HCT116 (cell line): ENCODE measurements at regions of chr17 and their contacts with region 1.

Region 1: DNA sequence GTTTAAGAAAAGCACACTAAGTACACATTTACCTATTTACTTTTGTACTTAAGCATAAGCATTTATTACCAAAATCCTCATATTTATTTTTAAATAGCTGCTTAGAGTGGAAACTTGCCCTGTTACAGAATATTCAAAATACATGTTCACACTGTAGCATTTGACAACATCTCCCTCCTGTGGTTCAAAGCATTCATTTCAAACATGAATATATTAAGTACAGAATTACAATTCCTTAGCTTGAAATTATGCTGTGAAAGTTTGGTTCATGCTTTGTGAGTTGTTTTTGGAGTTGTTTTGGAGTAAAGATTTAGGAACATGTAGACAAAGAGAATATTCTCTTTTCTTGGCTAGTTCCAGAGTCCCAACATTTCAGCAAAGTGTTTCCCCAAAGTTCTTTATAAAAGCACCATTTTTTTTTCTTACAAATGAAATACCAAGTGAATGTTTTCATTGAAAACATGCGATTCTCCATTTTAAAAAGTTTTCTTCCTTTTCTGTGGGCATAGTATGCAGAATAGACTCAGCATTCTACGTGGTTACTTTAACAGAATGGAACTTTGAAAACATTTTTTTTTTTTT is 33.2 kb downstream of the TUBD1 start:
- DNase-seq: no peak
- ATAC-seq: peak; percentile 67
- H3K4me3 ChIP-seq: no peak overlapping the region
- H3K27ac ChIP-seq: no peak overlapping the region
- H3K4me1 ChIP-seq: peaks cover 18 to 32% of the 10 kb centered on the region in 2 experiments; a peak in 3 of 4 replicates
- H3K27me3 ChIP-seq: no peaks in the 10 kb centered on the region
- CTCF ChIP-seq: peak; percentile 44 to 88 (median 80); a peak in 4 of 6 replicates
- POLR2A ChIP-seq: no peak
- RAD21 ChIP-seq: peak; percentile 97

Region 2: DNA sequence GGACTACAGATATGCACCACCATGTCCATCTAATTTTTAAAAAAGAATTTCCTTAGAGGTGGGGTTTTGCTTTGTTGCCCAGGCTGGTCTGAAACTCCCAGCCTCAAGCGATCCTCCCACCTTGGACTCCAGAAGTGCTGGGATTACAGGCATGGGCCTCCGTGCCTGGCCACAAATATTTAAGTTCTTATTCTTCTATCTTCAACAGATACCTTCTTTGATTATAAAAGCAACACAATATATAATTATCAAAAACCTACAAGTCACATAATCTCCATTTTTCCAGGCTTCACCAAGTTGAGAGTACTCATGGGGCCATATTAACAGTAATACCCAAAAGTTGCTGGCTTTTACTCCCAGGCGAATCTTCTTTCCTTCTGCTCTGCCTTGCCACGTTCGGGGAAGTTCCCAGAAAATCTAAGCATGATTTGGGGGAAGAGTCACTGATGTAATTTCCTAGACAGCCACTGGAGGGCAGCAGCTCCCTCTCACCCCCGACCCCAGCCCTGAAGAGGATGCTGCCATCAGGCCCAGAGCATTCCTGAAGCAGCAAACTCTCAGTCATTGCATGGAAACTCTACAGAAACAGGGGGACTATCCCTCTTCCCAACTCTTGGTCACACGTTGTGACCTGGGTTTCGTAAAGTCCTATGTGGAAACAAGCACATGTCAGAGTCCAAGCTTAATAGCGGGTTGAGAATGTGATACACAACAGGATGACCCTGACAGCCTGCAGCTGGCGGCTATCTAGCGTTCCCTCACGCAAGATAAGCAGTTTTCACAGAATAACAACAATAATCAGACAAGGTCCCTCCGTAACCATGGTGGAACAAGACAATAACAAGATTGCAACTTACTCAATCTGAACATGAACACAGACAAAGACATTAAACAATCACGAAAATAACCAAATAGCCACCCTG is 338.1 kb before region 1 on chr17:
- CTCF ChIA-PET with region 1: interaction called, 8 read pairs
- POLR2A ChIA-PET with region 1: no interaction called
- RAD21 ChIA-PET with region 1: no interaction called
- intact Hi-C with region 1: loop called (anchors 1 kb)
- DNase-seq: peak; percentile 49
- ATAC-seq: peak; percentile 98
- H3K4me3 ChIP-seq: no peak overlapping the region
- H3K27ac ChIP-seq: no peak overlapping the region
- H3K4me1 ChIP-seq: peaks cover 0 to 10% of the 10 kb centered on the region in 2 experiments; a peak in 2 of 4 replicates
- H3K27me3 ChIP-seq: no peaks in the 10 kb centered on the region
- CTCF ChIP-seq: peak; percentile 82 to 98 (median 96)
- POLR2A ChIP-seq: no peak
- RAD21 ChIP-seq: peak; percentile 92

Region 3: GRCh38 chr17:59746849-59747445 is 112.6 kb before region 1 on chr17:
- CTCF ChIA-PET with region 1: interaction called, 57 read pairs
- POLR2A ChIA-PET with region 1: interaction called, 8 read pairs
- RAD21 ChIA-PET with region 1: interaction called, 6 to 11 read pairs
- intact Hi-C with region 1: loop called (anchors 1 kb)
- DNase-seq: no peak
- ATAC-seq: peak; percentile 64
- H3K4me3 ChIP-seq: no peak overlapping the region
- H3K27ac ChIP-seq: peak overlapping the region; percentile 26
- H3K4me1 ChIP-seq: peaks cover 39 to 42% of the 10 kb centered on the region in 2 experiments
- H3K27me3 ChIP-seq: no peaks in the 10 kb centered on the region
- CTCF ChIP-seq: peak; percentile 57 to 89 (median 88)
- POLR2A ChIP-seq: no peak
- RAD21 ChIP-seq: peak; percentile 93

Region 4: DNA sequence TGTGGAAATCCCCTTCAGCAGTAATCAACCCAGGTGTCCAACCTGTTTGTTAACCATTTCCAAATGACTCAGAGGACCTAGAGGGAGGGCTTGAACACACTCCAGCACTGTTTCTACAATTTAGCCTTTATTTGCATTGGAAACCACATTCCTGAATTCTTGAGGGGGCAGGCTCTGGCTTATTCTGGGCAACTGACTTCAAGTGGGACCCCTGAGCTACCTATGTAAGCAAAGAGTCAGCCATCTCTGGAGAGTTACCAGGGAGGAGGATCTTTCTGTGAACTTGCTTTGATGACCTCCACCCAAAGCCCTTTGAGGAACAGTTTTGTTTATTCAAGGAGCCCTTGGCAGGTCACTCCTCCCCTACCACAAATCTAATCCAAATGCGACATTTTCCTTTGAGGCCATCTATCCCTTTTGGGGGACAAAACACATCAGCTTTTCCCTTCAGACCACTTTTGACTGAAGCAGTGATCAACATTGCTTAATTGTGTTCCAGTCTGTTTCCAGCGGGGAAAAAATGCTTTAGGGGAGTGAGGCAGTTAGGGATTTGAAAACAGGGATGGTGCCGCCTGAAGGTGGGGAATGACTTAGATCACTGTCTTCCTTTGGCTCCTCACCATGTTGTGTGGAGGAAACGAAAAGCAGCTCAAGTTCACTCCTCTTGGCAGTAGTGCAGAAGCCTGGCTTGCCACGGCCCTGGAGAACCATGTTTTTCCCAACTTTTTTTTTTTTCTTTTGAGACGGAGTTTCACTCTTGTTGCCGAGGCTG is 13.0 kb before region 1 on chr17:
- CTCF ChIA-PET with region 1: interaction called, 19 read pairs
- POLR2A ChIA-PET with region 1: interaction called, 9 read pairs
- RAD21 ChIA-PET with region 1: no interaction called
- intact Hi-C with region 1: no loop called
- DNase-seq: peak; percentile 94
- ATAC-seq: peak; percentile 30
- H3K4me3 ChIP-seq: peak overlapping the region; percentile 9 to 32; a peak in 3 of 4 replicates
- H3K27ac ChIP-seq: peak overlapping the region; percentile 97
- H3K4me1 ChIP-seq: peaks cover 76 to 97% of the 10 kb centered on the region in 2 experiments
- H3K27me3 ChIP-seq: no peaks in the 10 kb centered on the region
- CTCF ChIP-seq: no peak
- POLR2A ChIP-seq: no peak
- RAD21 ChIP-seq: no peak